ENCODE measurements at regions of chr12 and their contacts with region 1.

Region 1: GRCh38 chr12:62793256-62794217 is 141.4 kb downstream of the PPM1H start:
- DNase-seq: peak; percentile 92
- H3K4me3 ChIP-seq: no peak overlapping the region
- H3K27ac ChIP-seq: no peak overlapping the region
- H3K4me1 ChIP-seq: no peaks in the 10 kb centered on the region
- H3K27me3 ChIP-seq: no peaks in the 10 kb centered on the region
- CTCF ChIP-seq: peak; percentile 92

Region 2: DNA sequence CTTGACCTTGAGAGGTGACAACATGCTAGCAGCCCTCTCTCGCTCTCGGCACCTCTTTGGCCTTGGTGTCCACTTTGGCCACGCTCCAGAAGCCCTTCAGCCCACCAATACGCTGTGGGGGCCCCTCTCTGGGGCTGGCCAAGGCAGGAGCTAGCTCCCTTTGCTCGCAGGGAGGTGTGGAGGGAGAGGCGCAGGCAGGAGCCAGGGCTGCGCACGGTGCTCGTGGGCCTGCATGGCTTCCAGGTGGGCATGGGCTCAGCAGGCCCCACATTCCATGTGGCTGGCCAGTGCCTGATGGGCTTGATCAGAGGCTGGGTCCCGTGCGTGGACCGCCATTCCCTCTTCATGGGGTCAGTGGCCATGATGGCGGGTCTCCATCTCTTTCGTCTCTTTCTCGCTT is 1770.3 kb before region 1 on chr12:
- CTCF ChIA-PET with region 1: no interaction called
- POLR2A ChIA-PET with region 1: no interaction called
- intact Hi-C with region 1: no loop called
- DNase-seq: no peak
- H3K4me3 ChIP-seq: no peak overlapping the region
- H3K27ac ChIP-seq: no peak overlapping the region
- H3K4me1 ChIP-seq: no peaks in the 10 kb centered on the region
- H3K27me3 ChIP-seq: no peaks in the 10 kb centered on the region
- CTCF ChIP-seq: no peak

Region 3: DNA sequence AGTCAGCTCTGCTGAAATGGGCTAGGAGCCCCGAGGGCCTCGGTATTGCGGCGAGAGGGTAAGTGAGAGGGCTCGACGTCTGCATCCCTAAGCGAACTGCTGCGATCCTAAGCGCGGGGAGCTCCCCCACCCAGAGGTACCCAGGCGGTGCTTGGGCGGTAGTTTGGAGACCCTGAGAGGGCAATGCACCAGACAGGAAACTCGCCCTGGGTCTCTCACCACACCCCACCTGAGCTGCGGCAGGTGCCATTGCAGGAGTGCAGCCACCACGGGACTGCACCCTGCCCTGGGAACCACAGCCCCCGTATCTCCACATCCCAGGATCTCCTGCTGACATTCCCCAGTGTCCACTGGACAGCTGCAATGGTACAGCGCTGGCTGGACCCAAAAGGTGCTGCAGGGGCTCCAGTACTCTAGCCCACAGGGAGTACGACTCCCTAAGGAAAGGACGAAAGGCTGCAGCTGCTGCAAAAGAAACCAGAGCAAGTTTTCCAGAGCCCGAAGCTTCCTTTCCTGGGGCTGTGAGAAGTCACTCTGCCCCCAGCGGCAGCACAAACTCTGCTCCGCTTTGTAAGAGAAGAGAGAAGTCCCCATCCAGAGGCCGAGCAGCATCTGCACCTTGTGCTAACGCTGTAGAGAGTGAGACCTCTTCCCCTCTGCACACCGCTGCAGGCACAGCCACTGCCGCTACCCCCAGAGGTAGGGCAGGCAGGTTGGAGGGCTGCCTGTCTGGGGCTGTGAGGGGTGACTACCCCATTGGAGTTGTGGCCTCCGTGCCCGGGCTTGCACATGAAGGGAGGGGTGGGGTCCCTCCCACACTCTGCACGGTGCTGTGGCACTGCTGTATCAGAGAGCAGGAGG is 358.0 kb before region 1 on chr12:
- CTCF ChIA-PET with region 1: interaction called, 3 read pairs
- POLR2A ChIA-PET with region 1: no interaction called
- intact Hi-C with region 1: loop called (anchors 1 kb)
- DNase-seq: peak; percentile 79
- H3K4me3 ChIP-seq: peak overlapping the region; percentile 45
- H3K27ac ChIP-seq: no peak overlapping the region
- H3K4me1 ChIP-seq: no peaks in the 10 kb centered on the region
- H3K27me3 ChIP-seq: peaks cover 8% of the 10 kb centered on the region
- CTCF ChIP-seq: peak; percentile 67

Region 4: DNA sequence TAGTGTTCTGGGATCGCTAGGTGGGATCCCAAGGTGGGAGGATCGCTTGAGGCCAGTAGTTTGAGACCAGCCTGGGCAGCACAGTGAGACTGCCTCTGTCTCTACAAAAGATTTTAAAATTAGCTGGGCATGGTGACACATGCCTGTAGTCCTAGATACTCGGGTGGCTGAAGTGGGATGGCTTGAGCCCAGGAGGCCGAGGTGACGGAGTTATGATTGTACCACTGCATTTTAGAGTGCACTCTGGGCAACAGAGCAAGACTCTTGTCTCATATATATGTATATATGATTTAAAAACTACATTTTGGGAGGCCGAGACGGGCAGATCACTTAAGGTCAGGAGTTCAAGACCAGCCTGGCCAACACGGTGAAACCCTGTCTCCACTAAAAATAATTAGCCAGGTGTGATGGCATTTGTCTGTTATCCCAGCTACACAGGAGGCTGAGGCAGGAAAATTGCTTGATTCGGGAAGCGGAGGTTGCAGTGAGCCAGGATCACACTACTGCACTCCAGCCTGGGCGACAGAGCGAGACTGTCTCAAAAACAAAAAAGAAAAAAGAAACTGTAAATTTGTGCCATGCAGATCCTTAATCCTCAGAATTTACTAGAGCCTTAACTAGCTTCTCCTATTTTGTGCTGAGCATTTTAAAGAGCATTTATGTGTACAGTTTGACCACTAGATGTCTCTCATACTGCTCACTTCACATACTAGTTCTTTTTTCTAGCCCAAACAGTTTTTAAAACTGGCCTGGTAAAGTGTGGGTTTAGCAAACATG is 212.1 kb before region 1 on chr12:
- CTCF ChIA-PET with region 1: interaction called, 18 read pairs
- POLR2A ChIA-PET with region 1: no interaction called
- intact Hi-C with region 1: loop called (anchors 1 kb)
- DNase-seq: peak; percentile 62
- H3K4me3 ChIP-seq: no peak overlapping the region
- H3K27ac ChIP-seq: no peak overlapping the region
- H3K4me1 ChIP-seq: no peaks in the 10 kb centered on the region
- H3K27me3 ChIP-seq: no peaks in the 10 kb centered on the region
- CTCF ChIP-seq: peak; percentile 73

Region 5: DNA sequence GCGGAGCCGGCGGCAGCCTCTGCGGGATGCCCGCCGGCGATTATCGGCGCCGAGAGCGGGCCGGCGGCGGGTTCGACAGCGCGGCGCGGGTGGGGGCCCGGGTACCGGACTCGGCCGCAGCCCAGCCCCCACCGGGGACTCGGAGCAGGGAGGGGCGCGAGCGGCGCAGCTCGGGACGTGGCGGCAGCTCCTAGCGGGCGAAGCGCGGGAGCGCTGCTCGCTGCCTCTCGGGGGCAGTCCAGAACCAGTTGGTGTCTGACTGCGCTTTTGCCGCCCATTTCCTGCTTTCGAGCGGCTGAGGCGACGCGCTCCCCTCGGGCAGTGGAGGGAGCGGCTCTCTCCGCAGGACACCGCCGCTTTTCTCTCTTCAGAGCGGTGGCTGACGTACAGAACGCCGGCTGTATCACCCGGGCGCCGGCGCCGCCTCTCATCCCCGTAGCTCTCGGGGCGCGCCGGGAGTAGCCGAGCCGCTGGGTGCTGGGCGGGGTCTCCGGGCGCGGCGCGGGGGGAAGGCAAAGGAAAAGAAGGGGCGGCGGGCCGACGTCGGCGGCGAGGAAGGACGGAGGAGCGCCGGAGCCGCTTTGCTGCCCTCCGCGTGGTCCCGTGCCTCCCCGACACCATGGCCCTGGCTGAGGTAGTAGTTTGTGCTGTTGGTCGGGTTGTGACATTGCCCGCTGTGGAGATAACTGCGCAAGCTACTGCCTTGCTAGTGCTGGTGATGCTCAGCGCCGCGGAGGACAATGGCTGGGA is 190.3 kb before region 1 on chr12:
- CTCF ChIA-PET with region 1: interaction called, 6 read pairs
- POLR2A ChIA-PET with region 1: no interaction called
- intact Hi-C with region 1: loop called (anchors 1 kb)
- DNase-seq: peak; percentile 93
- H3K4me3 ChIP-seq: peak overlapping the region; percentile 75
- H3K27ac ChIP-seq: peak overlapping the region; percentile 99
- H3K4me1 ChIP-seq: peaks cover 19% of the 10 kb centered on the region
- H3K27me3 ChIP-seq: no peaks in the 10 kb centered on the region
- CTCF ChIP-seq: peak; percentile 44